Dendritic cell treated with granulocyte-macrophage colony-stimulating factor and Interleukin-4, amounts not matched to agents 40 ng/mL and 50 ng/mL, for 4 days (primary cell): ENCODE measurements at regions of chr12 and their contacts with region 1.

Region 1: GRCh38 chr12:93419388-93420034 is 22.2 kb downstream of the UBE2N start:
- H3K4me3 Mint-ChIP-seq: no peak overlapping the region
- H3K27ac Mint-ChIP-seq: no peak overlapping the region
- H3K4me1 Mint-ChIP-seq: peaks cover 44% of the 10 kb centered on the region
- H3K27me3 Mint-ChIP-seq: no peaks in the 10 kb centered on the region

Region 2: DNA sequence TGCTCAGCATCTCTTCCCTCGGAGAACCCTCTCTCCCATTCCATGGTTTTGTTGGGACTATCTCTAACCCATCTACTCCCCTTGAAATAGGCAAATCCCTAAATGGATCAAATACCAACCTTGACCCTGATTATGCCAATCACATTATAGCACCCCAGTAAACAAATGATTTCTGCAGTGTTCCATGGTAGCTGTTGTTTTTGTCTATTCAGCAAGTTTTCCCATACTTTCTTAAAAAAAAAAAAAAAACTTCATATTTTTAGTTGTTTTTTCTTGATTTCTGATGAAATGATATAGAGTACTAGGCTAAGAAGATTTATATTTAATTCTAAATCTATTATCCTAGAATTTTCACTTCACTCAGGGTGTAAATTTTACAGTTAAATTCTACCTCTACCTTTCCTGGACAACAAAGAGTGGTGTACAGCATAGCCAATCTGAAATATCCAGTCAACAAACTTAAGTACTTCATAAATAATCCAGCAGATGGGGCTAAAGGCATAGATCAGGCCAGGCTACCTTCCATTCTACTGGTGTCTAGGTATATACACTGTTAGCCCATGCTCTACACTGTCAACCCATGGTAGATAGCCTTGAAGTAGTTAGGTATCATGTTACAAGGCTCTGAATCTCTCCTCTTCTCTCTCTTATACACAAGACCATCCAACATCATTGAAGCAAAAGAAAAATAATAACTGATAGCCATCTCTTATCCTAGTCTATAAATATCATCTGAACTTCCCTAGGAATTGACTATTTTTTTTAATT is 634.5 kb before region 1 on chr12:
- intact Hi-C with region 1: loop called (anchors 10 kb)
- H3K4me3 Mint-ChIP-seq: no peak overlapping the region
- H3K27ac Mint-ChIP-seq: no peak overlapping the region
- H3K4me1 Mint-ChIP-seq: peaks cover 30% of the 10 kb centered on the region
- H3K27me3 Mint-ChIP-seq: no peaks in the 10 kb centered on the region

Region 3: DNA sequence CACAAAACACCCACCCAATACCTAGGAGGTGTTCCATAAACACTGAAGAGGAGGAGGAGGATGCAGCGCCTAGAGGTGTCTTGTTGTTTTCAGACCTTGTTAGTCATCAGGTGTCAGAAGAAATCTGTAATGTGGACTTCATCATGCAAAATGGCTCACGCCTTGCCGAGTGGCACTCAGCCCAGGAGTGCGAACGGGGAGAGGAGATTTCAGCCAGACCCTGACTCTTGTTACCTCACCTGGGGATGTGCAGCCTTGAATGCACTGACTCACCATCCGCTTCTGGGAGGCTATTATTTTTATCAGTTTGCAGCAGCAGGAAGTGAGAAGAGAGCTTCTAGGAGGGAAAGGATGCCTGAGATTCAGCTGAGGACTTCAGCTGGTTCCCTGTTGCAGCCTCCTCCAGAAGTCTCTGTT is 680.7 kb after region 1 on chr12:
- intact Hi-C with region 1: no loop called
- H3K4me3 Mint-ChIP-seq: no peak overlapping the region
- H3K27ac Mint-ChIP-seq: no peak overlapping the region
- H3K4me1 Mint-ChIP-seq: peaks cover 23% of the 10 kb centered on the region
- H3K27me3 Mint-ChIP-seq: peaks cover 46% of the 10 kb centered on the region